Endothelial cell of umbilical vein (primary cell): ENCODE measurements at regions of chr7 and their contacts with region 1.

Region 1: DNA sequence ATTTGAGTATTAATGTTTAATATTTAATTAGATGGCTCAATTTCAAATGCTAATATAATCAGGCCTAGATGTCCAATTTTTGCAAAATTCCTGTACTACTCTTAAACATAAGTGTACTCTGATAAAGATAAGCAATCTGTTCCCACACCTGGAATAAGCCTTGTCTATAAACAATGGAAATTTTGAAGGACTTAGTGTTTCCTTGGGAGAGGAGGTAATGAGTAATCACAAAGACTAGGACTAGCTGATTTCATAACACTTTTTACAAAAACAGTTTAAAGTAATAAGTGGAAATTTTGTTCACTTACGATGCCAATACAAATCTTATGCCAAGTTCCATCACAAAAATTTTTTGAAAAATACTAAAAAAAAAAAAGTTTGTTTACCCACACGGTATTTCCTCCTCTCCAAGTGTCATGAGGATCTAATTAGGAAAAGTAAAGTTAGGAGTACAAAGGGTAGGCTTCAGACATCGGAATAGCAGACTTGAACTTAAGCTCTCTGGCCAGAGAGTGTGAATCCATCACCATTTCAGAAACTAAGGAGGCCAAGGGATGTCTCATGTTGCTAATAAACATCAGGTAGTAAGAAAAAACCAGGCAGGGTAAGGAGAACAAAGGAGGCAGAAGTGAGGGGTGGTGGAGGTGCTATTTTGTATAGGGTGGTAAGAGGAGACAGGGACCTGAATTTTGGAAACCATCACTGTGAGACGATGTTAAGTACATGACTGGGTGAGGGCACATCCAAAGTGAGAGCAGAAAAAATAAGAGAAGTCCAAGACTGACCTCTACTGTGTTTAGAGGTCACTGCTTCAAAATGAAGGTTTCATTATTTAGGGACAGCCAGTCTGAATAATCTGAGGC is 61.3 kb downstream of the RAPGEF5 start:
- DNase-seq: peak; percentile 80
- H3K4me3 ChIP-seq: no peak overlapping the region
- H3K27ac ChIP-seq: peak overlapping the region; percentile 10
- H3K4me1 ChIP-seq: peaks cover 5% of the 10 kb centered on the region
- H3K27me3 ChIP-seq: no peaks in the 10 kb centered on the region
- CTCF ChIP-seq: peak in 1 of 2 donors; percentile 13
- POLR2A ChIP-seq: no peak

Region 2: GRCh38 chr7:22051886-22052673 is 243.6 kb before region 1 on chr7:
- CTCF ChIA-PET with region 1: no interaction called
- POLR2A ChIA-PET with region 1: no interaction called
- dilution Hi-C with region 1: no loop called
- intact Hi-C with region 1: no loop called
- DNase-seq: peak; percentile 1
- H3K4me3 ChIP-seq: no peak overlapping the region
- H3K27ac ChIP-seq: no peak overlapping the region
- H3K4me1 ChIP-seq: no peaks in the 10 kb centered on the region
- H3K27me3 ChIP-seq: peaks cover 2 to 9% of the 10 kb centered on the region in 2 experiments
- CTCF ChIP-seq: no peak
- POLR2A ChIP-seq: no peak

Region 3: GRCh38 chr7:22307816-22308545 is 12.3 kb after region 1 on chr7:
- CTCF ChIA-PET with region 1: interaction called, 13 read pairs
- POLR2A ChIA-PET with region 1: no interaction called
- dilution Hi-C with region 1: no loop called
- intact Hi-C with region 1: no loop called
- DNase-seq: no peak
- H3K4me3 ChIP-seq: no peak overlapping the region
- H3K27ac ChIP-seq: no peak overlapping the region
- H3K4me1 ChIP-seq: no peaks in the 10 kb centered on the region
- H3K27me3 ChIP-seq: no peaks in the 10 kb centered on the region
- CTCF ChIP-seq: no peak
- POLR2A ChIP-seq: no peak

Region 4: GRCh38 chr7:22356701-22357353 is 61.2 kb after region 1 on chr7 and contains the start of gene RAPGEF5:
- CTCF ChIA-PET with region 1: no interaction called
- POLR2A ChIA-PET with region 1: no interaction called
- dilution Hi-C with region 1: no loop called
- intact Hi-C with region 1: no loop called
- DNase-seq: no peak
- H3K4me3 ChIP-seq: peak within 1 kb of the TSS in 2 of 3 experiments; percentile 26 to 52
- H3K27ac ChIP-seq: no peak within 1 kb of the TSS
- H3K4me1 ChIP-seq: peaks cover 3% of the 10 kb centered on the region
- H3K27me3 ChIP-seq: no peaks in the 10 kb centered on the region
- CTCF ChIP-seq: no peak
- POLR2A ChIP-seq: no peak
- total RNA-seq, gene RAPGEF5: 43.2 and 43.3 TPM in 2 replicates

Region 5: DNA sequence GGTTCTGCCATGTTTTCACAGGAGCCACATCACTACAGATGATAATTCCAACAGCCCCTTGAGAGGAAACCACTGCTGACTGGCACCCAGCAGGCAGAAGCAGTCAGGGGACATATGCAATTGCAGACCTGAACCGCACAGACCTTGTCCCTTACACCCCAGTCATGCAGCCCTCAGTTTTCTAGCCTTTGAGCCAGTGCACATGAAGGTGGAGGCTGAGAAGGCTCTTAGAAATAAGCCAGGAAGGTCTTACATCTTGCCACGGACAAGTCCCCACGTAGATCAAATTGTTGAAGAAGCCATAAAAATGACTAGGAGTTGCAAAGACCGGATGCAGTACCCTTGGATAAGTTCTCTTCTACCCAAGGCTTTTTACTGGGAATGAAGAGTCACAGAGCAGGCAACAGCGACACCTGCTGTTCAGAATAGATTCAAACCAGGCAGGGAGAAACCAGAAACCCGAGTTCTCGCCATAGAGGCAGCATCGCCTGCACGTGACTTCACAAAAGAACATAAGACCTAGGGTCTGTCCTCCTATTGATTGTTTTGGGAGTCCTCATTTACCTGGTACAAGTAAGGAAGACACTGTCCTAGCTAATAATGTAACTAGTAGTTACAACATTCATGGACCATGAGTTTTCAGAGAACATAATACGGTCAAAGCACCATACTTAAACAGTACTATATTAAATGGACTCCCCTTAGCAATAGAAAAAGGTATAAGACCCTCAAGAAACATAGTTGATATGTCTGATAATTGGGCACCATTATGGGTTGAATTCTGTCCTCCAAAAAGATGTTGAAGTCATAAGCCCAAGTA is 193.2 kb after region 1 on chr7:
- CTCF ChIA-PET with region 1: interaction called, 9 read pairs
- POLR2A ChIA-PET with region 1: no interaction called
- dilution Hi-C with region 1: no loop called
- intact Hi-C with region 1: loop called (anchors 1 kb)
- DNase-seq: peak; percentile 86
- H3K4me3 ChIP-seq: no peak overlapping the region
- H3K27ac ChIP-seq: peak overlapping the region; percentile 44
- H3K4me1 ChIP-seq: peaks cover 42% of the 10 kb centered on the region
- H3K27me3 ChIP-seq: no peaks in the 10 kb centered on the region
- CTCF ChIP-seq: peak; percentile 74 to 90
- POLR2A ChIP-seq: no peak